ENCODE measurements at regions of chr7 and their contacts with region 1.

Region 1: DNA sequence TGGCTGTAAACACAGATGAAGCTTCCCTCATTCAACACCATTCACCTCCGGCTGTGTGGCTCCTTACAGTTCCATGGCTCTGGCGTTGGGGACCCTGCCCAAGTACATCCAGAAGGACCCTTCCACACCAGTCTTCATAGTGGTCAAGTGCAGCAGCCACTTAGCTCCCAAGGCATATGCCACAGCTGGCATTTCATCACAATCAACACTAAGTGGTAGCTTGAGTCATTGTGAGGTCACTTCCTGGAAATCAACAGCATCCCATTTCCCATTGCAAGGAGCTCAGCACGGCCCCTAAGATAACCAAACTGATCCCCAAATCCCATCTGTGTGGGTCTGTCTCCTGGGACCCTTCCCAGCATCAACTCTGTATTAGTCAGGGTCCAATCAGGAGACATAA is 174.6 kb downstream of the TPST1 start:
- DNase-seq: no peak
- CTCF ChIP-seq: no peak

Region 2: GRCh38 chr7:66296001-66296521 is 83.7 kb before region 1 on chr7:
- CTCF ChIA-PET with region 1: no interaction called
- POLR2A ChIA-PET with region 1: no interaction called
- DNase-seq: no peak
- CTCF ChIP-seq: no peak

Region 3: DNA sequence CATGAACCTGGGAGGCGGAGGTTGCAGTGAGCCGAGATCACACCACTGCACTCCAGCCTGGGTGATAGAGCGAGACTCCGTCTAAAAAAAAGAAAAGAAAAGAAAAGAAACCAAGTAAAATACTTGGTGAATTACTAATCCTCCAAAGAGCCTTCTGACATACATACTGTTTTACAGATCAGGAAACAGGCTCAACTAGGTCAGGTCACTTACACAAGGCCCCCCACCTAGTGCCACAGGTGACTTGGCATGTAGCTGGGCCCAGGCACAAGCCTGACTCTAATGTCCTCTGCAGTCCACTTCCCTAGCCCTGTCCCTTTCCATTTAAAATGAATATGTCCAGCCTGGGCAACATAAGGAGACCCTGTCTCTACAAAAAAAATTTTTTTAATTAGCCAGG is 17.6 kb before region 1 on chr7:
- CTCF ChIA-PET with region 1: interaction called, 10 read pairs
- POLR2A ChIA-PET with region 1: no interaction called
- DNase-seq: no peak
- CTCF ChIP-seq: no peak

Measured in GM10248 (cell line).